ENCODE measurements at regions of chr21 and their contacts with region 1.

Region 1: GRCh38 chr21:25457411-25457810 is 149.9 kb downstream of the MRPL39 start:
- DNase-seq: no peak
- ATAC-seq: peak; percentile 65
- H3K4me3 Mint-ChIP-seq: peak overlapping the region; percentile 65
- H3K27ac Mint-ChIP-seq: peak overlapping the region; percentile 87
- H3K4me1 Mint-ChIP-seq: peaks cover 66% of the 10 kb centered on the region
- H3K27me3 Mint-ChIP-seq: no peaks in the 10 kb centered on the region
- CTCF ChIP-seq: no peak

Region 2: DNA sequence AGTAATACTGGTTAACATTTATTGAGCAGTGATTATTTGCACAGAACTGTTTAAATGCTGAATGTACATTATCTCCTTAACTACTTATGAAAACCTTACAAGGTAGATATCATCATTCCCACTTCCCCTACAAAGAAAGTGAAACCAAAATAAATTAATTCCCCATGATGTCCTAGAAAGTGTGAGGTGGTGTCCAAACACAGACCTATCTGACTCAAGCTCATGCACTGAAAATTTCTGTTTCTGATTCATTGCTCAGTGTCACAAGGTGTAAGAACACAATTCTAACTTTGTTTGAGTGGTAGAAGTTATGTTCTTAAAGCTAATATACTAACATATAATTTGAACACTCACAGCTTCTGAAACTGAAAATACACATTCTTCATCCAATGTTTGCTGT is 28.9 kb before region 1 on chr21:
- CTCF ChIA-PET with region 1: no interaction called
- POLR2A ChIA-PET with region 1: interaction called, 10 read pairs
- intact Hi-C with region 1: loop called (anchors 1 kb)
- DNase-seq: no peak
- ATAC-seq: peak; percentile 15
- H3K4me3 Mint-ChIP-seq: peak overlapping the region; percentile 35
- H3K27ac Mint-ChIP-seq: peak overlapping the region; percentile 65
- H3K4me1 Mint-ChIP-seq: peaks cover 53% of the 10 kb centered on the region
- H3K27me3 Mint-ChIP-seq: no peaks in the 10 kb centered on the region
- CTCF ChIP-seq: no peak

Region 3: DNA sequence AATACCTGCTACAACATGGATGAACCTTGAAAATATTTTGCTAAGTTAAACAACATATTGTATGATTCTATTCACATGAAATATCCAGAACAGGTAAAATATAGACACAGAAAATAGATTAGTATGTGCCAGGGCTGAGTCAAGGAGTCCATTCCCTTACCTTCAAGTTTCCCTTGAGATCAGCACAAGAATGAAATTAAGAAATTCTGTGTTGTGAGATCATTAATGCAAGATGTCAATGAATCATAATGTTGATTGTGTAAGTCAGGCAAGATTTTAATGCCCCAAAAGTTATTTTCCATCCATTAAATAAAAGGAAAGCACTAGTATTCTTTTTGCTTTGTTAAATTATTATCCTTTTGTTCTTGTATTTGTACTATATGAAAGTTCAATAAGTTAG is 10.5 kb after region 1 on chr21:
- CTCF ChIA-PET with region 1: no interaction called
- POLR2A ChIA-PET with region 1: no interaction called
- intact Hi-C with region 1: no loop called
- DNase-seq: no peak
- ATAC-seq: no peak
- H3K4me3 Mint-ChIP-seq: no peak overlapping the region
- H3K27ac Mint-ChIP-seq: no peak overlapping the region
- H3K4me1 Mint-ChIP-seq: peaks cover 17% of the 10 kb centered on the region
- H3K27me3 Mint-ChIP-seq: no peaks in the 10 kb centered on the region
- CTCF ChIP-seq: no peak

Region 4: DNA sequence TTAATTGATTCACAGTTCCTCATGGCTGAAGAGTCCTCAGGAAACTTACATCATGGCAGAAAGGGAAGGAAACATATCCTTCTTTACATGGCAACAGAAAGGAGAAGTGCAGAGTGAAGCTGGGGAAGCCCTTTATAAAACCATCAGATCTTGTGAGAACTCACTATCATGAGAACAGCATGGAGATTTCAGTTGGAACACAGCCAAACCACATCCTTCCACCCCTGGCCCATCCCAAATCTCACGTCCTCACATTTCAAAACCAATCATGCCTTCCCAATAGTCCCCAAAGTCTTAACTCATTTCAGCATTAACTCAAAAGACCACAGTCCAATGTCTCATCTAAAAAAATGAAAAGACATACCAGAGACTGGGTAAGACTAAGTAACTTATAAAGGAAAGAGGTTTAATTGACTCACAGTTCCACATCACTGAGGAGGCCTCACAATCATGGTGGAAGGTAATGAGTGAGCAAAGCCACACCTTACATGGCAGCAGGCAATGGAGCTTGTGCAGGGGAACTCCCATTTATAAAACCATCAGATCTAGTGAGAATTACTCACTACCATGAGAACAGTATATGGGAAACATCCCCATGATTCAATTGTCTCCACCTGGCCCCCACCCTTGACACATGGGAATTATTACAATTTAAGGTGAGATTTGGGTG is 44.7 kb after region 1 on chr21:
- CTCF ChIA-PET with region 1: no interaction called
- POLR2A ChIA-PET with region 1: interaction called, 4 read pairs
- intact Hi-C with region 1: loop called (anchors 1 kb)
- DNase-seq: no peak
- ATAC-seq: peak; percentile 83
- H3K4me3 Mint-ChIP-seq: peak overlapping the region; percentile 32
- H3K27ac Mint-ChIP-seq: peak overlapping the region; percentile 82
- H3K4me1 Mint-ChIP-seq: peaks cover 54% of the 10 kb centered on the region
- H3K27me3 Mint-ChIP-seq: no peaks in the 10 kb centered on the region
- CTCF ChIP-seq: no peak

Region 5: GRCh38 chr21:25561668-25562641 is 104.5 kb after region 1 on chr21:
- CTCF ChIA-PET with region 1: interaction called, 3 read pairs
- POLR2A ChIA-PET with region 1: interaction called, 16 read pairs
- intact Hi-C with region 1: loop called (anchors 1 kb)
- DNase-seq: peak; percentile 73
- ATAC-seq: peak; percentile 70
- H3K4me3 Mint-ChIP-seq: peak overlapping the region; percentile 92
- H3K27ac Mint-ChIP-seq: peak overlapping the region; percentile 95
- H3K4me1 Mint-ChIP-seq: peaks cover 60% of the 10 kb centered on the region
- H3K27me3 Mint-ChIP-seq: no peaks in the 10 kb centered on the region
- CTCF ChIP-seq: no peak